Astrocyte of the cerebellum (primary cell): ENCODE measurements at regions of chr12 and their contacts with region 1.

Region 1: GRCh38 chr12:131351319-131352028 is 359.4 kb upstream of the SFSWAP start:
- DNase-seq: no peak
- H3K4me3 ChIP-seq: no peak overlapping the region
- CTCF ChIP-seq: no peak

Region 2: GRCh38 chr12:131242741-131243496 is 108.6 kb before region 1 on chr12:
- in situ Hi-C with region 1: loop called (anchors 10 kb)
- DNase-seq: no peak
- H3K4me3 ChIP-seq: no peak overlapping the region
- CTCF ChIP-seq: no peak